Lower leg skin (tissue), 4 donors: ENCODE measurements at regions of chr6 and their contacts with region 1.

Region 1: DNA sequence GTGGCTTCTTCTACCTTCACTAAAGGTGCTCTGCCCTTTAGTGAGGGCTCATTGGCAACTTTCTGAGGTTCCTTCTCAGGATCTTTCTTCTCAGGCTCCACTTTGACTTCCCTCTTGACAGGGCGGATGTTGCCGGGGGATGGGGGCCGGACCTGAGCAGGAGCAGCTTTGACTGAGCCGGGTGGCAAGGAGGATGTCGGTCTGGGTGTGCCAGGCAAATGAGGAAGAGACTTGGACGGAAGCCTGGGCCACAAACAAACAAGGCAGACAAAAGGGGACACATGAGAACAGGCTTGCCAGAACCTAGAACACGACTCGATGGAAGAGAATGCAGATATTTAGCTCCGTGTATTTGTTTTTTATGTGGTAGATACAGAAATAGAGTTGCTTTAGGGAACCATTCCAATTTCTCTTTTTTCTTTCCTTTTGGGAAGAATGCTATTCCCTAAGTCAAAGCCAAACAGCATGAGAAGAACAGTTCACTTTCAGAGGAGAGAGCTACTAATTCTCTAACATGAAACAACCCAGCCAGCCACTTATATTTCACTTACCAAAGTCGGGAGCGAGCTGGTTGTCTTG is 76.2 kb upstream of the BCLAF1 start:
- DNase-seq: peak; percentile 62 to 89
- H3K4me3 ChIP-seq: no peak overlapping the region
- CTCF ChIP-seq: no peak
- POLR2A ChIP-seq: no peak

Region 2: DNA sequence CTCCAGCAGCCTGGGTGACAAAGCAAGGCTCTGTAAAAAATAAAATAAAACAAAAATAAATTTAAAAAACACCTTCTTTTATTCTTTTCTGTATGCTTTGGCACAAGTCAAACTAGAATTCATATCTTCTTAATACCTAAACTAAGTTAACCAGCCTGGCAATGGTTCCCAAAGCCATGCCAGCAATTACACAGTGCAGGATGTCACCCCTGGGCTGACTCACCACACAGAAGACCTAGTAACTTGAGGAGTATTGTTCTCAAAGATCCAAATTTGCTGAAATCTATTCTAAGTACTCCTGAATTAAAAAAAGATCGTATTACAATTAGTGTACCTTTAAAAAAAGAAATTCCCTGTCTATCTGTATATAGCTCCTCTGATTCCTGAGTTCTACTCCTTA is 1885.3 kb before region 1 on chr6:
- intact Hi-C with region 1: loop called (anchors 5 kb)
- DNase-seq: no peak
- H3K4me3 ChIP-seq: no peak overlapping the region
- CTCF ChIP-seq: no peak
- POLR2A ChIP-seq: no peak

Region 3: DNA sequence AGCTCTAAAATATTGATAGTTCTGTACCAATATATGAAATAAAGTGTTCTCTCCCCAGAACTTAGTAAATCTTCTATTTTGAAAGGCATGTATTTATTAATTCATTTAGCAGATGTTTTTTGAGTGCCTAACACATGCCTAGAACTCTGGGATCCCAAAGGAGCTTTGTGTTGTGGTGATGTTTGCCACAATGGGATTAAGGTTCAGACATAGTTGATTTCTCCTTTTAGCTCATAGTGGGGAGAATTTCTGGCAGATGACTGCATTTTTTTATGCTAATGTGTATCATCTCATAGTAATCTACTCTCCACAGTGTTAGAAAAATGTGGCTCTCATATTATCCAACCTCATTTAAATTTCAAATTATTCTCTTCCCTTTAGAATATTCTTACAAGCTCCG is 1163.0 kb before region 1 on chr6:
- intact Hi-C with region 1: no loop called
- DNase-seq: no peak
- H3K4me3 ChIP-seq: no peak overlapping the region
- CTCF ChIP-seq: no peak
- POLR2A ChIP-seq: no peak